Gastrocnemius medialis (tissue), 4 donors: ENCODE measurements at regions of chr2 and their contacts with region 1.

Region 1: DNA sequence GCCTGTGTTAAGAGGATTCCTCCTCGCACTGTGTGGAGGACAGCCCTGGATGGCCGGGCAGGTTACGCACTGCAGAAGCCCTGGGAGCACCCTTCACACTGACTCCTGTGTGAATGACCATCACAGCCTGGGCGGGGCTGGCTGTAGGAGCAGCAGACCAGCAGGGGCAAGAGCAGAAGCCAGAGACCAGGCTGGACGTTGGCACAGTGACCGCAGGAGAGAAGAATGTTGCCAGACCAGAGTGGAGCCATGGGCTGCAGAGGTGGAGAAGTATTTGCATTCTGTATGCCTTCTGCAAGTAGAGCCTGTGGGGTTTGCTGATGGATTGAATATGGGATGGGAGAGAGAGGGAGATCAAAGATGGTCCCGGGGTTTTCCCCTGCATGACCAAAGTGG is 23.1 kb downstream of the LRRFIP1 start:
- DNase-seq: no peak
- ATAC-seq: peak in 1 of 2 donors; percentile 25
- H3K4me3 ChIP-seq: no peak overlapping the region
- H3K27ac ChIP-seq: peak overlapping the region; percentile 66 to 94 (median 90)
- H3K4me1 ChIP-seq: peaks cover 40 to 69% of the 10 kb centered on the region in 2 donors
- H3K27me3 ChIP-seq: no peaks in the 10 kb centered on the region
- CTCF ChIP-seq: no peak
- POLR2A ChIP-seq: no peak

Region 2: GRCh38 chr2:237581751-237582746 is 68.4 kb before region 1 on chr2:
- in situ Hi-C with region 1: no loop called
- intact Hi-C with region 1: loop called (anchors 1 kb)
- DNase-seq: peak; percentile 54 to 76
- ATAC-seq: peak; percentile 90 to 93
- H3K4me3 ChIP-seq: peak overlapping the region; percentile 38 to 51 (median 39)
- H3K27ac ChIP-seq: peak overlapping the region; percentile 51 to 75 (median 68)
- H3K4me1 ChIP-seq: peaks cover 12 to 14% of the 10 kb centered on the region in 2 donors
- H3K27me3 ChIP-seq: no peaks in the 10 kb centered on the region
- CTCF ChIP-seq: peak in 4 of 5 experiments; percentile 27 to 56 (median 46)
- POLR2A ChIP-seq: no peak

Region 3: GRCh38 chr2:237590272-237591140 is 59.9 kb before region 1 on chr2 and contains the start of gene RAB17:
- in situ Hi-C with region 1: loop called in 1 of 4 experiments (anchors 10 kb)
- intact Hi-C with region 1: no loop called
- DNase-seq: peak in 1 of 2 donors; percentile 46
- ATAC-seq: peak; percentile 31 to 77
- H3K4me3 ChIP-seq: no peak within 1 kb of the TSS
- H3K27ac ChIP-seq: no peak within 1 kb of the TSS
- H3K4me1 ChIP-seq: peaks cover 14 to 15% of the 10 kb centered on the region in 2 donors
- H3K27me3 ChIP-seq: no peaks in the 10 kb centered on the region
- CTCF ChIP-seq: no peak
- POLR2A ChIP-seq: no peak
- total RNA-seq, gene RAB17: 0.42 to 1.3 TPM in 2 of 4 donors, not detected in the others